K562 (cell line): ENCODE measurements at regions of chr1 and their contacts with region 1.

Region 1: DNA sequence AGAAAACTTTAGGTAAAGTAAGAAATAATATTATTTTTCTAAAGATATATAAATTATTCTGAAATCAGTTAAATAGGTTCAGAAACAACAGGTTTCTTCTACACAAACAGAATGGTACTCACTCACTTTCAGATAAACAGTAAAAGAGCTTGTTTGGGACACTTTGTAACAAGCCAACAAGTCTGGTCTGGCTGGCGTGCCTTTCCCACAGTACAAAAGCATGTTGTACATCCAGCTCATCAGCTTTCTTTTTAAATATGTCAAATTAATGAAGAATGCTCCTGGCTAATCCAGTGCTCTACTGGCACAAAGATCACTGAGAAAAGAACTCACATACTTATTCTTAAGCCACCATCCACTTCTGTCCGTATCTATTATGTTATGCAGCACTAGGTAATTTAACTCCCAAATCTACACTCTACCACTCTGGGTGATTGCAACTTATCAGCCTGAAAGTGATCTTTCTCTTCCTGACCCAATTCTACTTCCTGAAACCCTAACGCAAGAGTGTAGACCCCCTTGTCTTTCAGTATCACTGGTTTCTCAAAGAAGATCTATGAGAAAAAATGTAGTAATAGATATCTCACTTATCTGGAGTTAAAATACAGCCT is 32.6 kb downstream of the TRIT1 start:
- DNase-seq: no peak
- ATAC-seq: peak; percentile 57
- H3K4me3 ChIP-seq: no peak overlapping the region
- H3K27ac ChIP-seq: no peak overlapping the region; the same call in 2 of the 3 replicates
- H3K4me1 ChIP-seq: peaks cover under 1 to 11% of the 10 kb centered on the region in 2 experiments; a peak in 3 of 5 replicates
- H3K27me3 ChIP-seq: no peaks in the 10 kb centered on the region
- CTCF ChIP-seq: no peak
- EP300 ChIP-seq: no peak
- POLR2A ChIP-seq: no peak
- RAD21 ChIP-seq: no peak

Region 2: DNA sequence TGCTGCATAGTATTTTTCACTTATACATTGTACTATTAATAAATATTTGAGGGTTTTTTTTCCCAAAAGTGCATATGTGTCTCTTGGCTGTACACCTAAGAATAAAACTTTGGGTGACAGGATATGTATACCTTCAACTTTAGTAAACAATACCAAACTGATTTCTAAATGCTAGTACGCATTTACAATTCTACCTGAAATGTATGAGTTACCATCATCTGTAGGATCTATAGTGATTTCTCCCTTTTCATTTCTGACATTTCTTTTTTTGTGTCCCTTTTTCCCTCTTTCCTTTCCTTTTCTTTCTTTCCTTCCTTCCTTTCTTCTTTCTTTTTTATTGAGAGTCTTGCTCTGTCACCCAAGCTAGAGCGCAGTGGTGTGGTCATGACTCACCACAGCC is 45.3 kb before region 1 on chr1:
- CTCF ChIA-PET with region 1: no interaction called
- POLR2A ChIA-PET with region 1: no interaction called
- in situ Hi-C with region 1: no loop called
- intact Hi-C with region 1: no loop called
- DNase-seq: no peak
- ATAC-seq: no peak
- H3K4me3 ChIP-seq: no peak overlapping the region
- H3K27ac ChIP-seq: no peak overlapping the region
- H3K4me1 ChIP-seq: no peaks in the 10 kb centered on the region; a peak in 1 of 5 replicates
- H3K27me3 ChIP-seq: no peaks in the 10 kb centered on the region
- CTCF ChIP-seq: no peak
- EP300 ChIP-seq: no peak
- POLR2A ChIP-seq: no peak
- RAD21 ChIP-seq: no peak

Region 3: DNA sequence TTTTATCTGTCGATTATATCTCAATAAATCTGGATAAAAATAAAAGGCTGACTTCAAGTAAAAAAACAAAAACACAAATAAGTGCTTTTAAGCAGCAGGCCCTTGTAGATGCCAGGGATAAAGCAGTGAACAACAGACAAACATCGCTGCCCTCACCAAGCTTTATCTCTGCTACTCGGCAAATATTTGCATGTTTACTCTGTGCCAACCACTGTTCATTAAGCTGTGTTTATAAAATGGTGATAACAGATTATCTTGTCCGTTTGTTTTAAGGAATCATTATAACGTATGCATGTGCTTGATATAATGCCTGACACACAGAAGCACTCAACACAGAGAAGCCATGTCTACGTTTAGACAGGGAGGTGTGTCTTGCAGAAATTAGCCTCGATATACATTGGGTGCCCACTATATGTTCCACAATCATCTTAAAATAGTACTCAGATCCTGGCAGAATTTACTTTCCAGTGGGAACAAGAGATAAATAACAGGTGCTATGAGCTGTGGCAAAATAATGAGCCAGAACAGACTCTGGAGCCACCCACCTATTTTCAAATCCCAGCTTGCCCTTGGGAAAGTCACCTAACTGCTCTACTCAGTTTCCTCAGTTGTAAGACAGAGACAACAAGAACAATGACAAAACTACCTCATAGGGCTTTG is 14.6 kb before region 1 on chr1:
- CTCF ChIA-PET with region 1: no interaction called
- POLR2A ChIA-PET with region 1: interaction called, 20 read pairs
- in situ Hi-C with region 1: no loop called
- intact Hi-C with region 1: no loop called
- DNase-seq: no peak
- ATAC-seq: no peak
- H3K4me3 ChIP-seq: no peak overlapping the region
- H3K27ac ChIP-seq: no peak overlapping the region
- H3K4me1 ChIP-seq: peaks cover 6 to 15% of the 10 kb centered on the region in 2 experiments; a peak in 3 of 5 replicates
- H3K27me3 ChIP-seq: no peaks in the 10 kb centered on the region
- CTCF ChIP-seq: no peak
- EP300 ChIP-seq: no peak
- POLR2A ChIP-seq: no peak
- RAD21 ChIP-seq: no peak

Region 4: GRCh38 chr1:40563266-40563665 is 712.6 kb after region 1 on chr1:
- CTCF ChIA-PET with region 1: no interaction called
- POLR2A ChIA-PET with region 1: no interaction called
- in situ Hi-C with region 1: no loop called
- intact Hi-C with region 1: no loop called
- DNase-seq: no peak
- ATAC-seq: no peak
- H3K4me3 ChIP-seq: no peak overlapping the region
- H3K27ac ChIP-seq: no peak overlapping the region
- H3K4me1 ChIP-seq: peaks cover 0 to 4% of the 10 kb centered on the region in 2 experiments; a peak in 1 of 5 replicates
- H3K27me3 ChIP-seq: peaks cover 5 to 8% of the 10 kb centered on the region in 2 experiments; a peak in 3 of 5 replicates
- CTCF ChIP-seq: peak in 1 of 3 experiments; percentile 7; a peak in 1 of 6 replicates
- EP300 ChIP-seq: no peak
- POLR2A ChIP-seq: no peak
- RAD21 ChIP-seq: no peak